Mammary epithelial cell (primary cell): ENCODE measurements at regions of chr11 and their contacts with region 1.

Region 1: DNA sequence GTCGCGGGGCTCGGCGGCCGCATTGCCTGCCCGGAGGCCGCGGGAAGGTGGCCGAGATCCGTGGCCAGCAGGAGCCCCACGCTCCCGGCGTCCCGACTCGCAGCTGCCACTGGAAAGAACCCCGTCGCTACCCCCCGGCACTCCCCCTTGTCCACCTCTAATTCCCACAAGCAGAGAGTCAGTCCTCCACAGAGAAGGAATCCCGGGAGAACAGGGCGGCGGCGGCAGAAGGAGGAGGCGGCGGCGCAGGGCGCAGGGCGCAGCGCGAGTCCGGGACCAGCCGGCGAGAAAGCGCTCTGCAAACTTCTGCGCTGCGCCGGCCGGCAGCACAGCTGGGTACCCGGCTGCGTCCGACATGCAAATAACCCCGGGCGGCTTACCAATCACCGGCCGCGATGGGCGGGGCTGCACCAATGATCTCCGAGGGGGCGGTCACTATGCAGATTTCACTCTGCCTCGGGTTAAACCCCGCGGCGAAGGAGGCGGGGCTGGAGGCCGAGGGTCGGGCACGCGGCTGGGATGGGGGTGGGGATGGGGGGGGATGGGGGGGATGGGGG is at the start of gene ABTB2:
- DNase-seq: peak; percentile 96
- H3K4me3 ChIP-seq: peak within 1 kb of the TSS; percentile 56 to 67 (median 64)
- H3K27ac ChIP-seq: peak within 1 kb of the TSS; percentile 46
- H3K4me1 ChIP-seq: peaks cover 33% of the 10 kb centered on the region
- H3K27me3 ChIP-seq: no peaks in the 10 kb centered on the region
- CTCF ChIP-seq: no peak
- total RNA-seq, gene ABTB2: 5.1 to 8.0 TPM

Region 2: DNA sequence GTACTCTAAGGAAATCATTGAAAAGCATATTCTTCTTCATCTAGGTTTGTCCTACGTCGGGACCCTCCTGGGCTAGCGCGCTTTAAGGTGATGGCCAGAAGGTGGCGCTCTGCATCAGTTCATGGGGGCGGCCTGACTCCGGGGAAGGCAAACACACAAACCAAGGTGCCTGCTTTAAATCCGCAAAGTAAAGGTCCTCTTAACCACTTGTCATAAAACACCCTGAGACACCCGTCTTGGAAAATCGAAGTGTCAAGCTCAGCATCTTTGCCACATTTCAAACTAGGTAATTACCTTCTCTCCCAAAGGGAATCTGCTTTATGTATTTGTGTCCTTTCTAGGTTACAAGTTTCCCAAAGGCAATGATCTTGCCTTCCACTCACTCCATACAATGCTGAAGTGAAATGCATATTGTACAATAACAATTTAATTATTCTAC is 499.8 kb before region 1 on chr11:
- CTCF ChIA-PET with region 1: no interaction called
- dilution Hi-C with region 1: no loop called
- in situ Hi-C with region 1: loop called in 1 of 2 experiments (anchors 25 kb)
- intact Hi-C with region 1: loop called (anchors 1 kb)
- DNase-seq: peak; percentile 35
- H3K4me3 ChIP-seq: no peak overlapping the region
- H3K27ac ChIP-seq: no peak overlapping the region
- H3K4me1 ChIP-seq: no peaks in the 10 kb centered on the region
- H3K27me3 ChIP-seq: no peaks in the 10 kb centered on the region
- CTCF ChIP-seq: peak; percentile 69 to 97

Region 3: DNA sequence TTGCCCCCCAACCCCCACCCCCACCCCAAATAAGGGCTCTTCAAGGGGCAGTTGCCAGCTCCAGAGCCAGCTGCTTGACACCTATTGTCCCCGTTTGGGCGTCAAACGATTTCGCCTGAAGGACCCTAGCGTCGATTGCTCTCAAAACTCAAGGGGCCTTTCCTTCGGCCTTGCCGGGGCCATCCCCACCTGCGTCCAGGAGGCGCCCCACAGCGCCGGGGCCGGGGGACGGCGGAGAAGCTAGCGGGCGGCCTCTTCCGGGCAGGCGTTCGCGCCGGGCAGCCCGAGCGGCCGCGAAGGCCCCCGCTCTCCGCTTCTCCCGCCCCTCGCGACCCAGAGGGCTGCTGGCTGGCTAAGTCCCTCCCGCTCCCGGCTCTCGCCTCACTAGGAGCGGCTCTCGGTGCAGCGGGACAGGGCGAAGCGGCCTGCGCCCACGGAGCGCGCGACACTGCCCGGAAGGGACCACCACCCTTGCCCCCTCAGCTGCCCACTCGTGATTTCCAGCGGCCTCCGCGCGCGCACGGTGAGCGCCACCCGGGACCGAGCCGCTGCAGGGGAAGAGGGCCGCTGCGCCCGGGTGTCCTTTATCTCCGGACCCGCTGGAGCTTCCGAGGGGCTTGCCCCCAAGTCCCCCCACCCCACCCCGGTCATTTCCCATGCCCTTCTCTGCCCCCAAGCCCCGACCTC is 306.3 kb before region 1 on chr11 and contains the start of gene CAPRIN1:
- CTCF ChIA-PET with region 1: no interaction called
- dilution Hi-C with region 1: no loop called
- in situ Hi-C with region 1: no loop called
- intact Hi-C with region 1: loop called (anchors 5 kb)
- DNase-seq: peak; percentile 89
- H3K4me3 ChIP-seq: peak within 1 kb of the TSS; percentile 90 to 100 (median 99)
- H3K27ac ChIP-seq: peak within 1 kb of the TSS; percentile 94
- H3K4me1 ChIP-seq: peaks cover 10% of the 10 kb centered on the region
- H3K27me3 ChIP-seq: no peaks in the 10 kb centered on the region
- CTCF ChIP-seq: no peak
- total RNA-seq, gene CAPRIN1: 194 to 217 TPM

Region 4: DNA sequence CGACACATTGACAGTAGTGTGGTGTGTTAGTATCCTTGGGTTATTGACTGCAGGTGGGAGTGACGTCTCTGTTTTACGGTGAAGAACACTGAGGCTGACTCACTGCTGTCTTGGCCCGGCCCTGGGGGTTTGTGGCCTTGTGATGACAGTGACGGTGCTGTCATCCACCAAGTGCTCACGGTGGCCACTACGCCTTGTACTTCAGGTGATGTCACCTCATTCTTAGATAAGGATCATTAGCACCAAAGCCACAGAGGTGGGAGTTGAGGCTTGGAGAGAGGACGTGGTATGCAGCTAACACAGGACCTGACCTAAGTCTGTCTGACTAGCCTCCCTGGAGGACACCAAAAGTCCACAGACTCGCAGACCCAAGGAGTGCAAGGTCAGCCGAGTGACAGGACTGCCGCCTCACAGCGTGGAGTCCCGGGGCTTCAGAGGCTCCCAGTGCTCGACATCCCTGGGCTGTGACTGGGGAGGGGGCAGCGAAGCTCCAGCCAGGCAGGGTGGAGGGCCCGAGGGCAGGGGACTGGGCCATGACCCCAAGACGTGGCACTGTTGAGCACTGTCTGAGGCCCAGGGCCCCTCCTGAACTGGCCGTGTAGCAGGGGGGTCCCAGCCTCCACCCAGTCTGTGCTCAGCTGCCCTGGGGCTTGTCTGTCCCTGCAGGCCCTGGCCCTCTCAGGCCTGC is 195.8 kb before region 1 on chr11:
- CTCF ChIA-PET with region 1: no interaction called
- dilution Hi-C with region 1: no loop called
- in situ Hi-C with region 1: loop called in 1 of 2 experiments (anchors 5 kb)
- intact Hi-C with region 1: no loop called
- DNase-seq: peak; percentile 47
- H3K4me3 ChIP-seq: no peak overlapping the region
- H3K27ac ChIP-seq: no peak overlapping the region
- H3K4me1 ChIP-seq: peaks cover 5% of the 10 kb centered on the region
- H3K27me3 ChIP-seq: no peaks in the 10 kb centered on the region
- CTCF ChIP-seq: no peak

Region 5: GRCh38 chr11:34192481-34193401 is 165.0 kb before region 1 on chr11:
- CTCF ChIA-PET with region 1: no interaction called
- dilution Hi-C with region 1: no loop called
- in situ Hi-C with region 1: loop called in 1 of 2 experiments (anchors 10 kb)
- intact Hi-C with region 1: loop called (anchors 5 kb)
- DNase-seq: peak; percentile 98
- H3K4me3 ChIP-seq: peak overlapping the region in 2 of 3 experiments; percentile 1 to 13
- H3K27ac ChIP-seq: peak overlapping the region; percentile 45
- H3K4me1 ChIP-seq: peaks cover 18% of the 10 kb centered on the region
- H3K27me3 ChIP-seq: no peaks in the 10 kb centered on the region
- CTCF ChIP-seq: no peak

Region 6: DNA sequence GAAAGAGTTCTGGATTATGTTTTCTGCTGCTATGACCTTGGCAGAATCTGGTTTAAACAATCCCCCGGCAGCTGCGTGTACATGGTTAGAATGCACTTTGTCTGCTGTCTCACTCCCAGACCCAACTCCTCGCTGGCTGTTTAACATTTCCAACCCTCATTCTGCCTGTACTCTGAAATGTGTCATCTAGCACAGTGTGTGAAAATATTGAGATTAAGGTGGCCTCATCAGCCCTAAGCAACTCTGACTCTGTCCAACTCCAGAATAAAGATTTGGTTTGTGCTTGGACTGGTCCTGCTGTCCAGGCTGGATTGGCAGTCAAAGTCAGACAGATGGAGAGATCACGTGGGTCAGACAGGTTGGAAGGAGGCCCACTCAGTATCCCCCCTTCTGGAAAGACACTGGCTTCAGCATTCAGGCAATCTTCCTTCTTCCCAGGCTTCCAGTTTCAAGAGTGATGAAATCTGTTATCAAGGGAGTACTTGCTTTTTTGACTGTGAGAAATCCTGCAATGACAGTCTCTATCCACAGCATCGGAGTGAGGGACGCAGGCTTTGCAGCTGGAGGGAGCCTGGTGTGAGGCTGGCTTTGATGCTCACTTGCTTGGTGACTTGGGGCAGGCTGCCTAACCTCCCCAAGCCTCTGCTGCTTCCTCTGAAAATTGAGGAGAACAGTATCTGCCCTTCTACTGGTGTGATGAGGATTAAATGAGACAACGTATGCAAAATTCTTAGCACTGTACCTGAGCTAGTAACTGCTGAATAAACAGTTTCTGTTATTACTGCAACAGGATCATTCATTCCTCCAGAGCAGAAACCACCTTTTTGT is 29.8 kb before region 1 on chr11:
- CTCF ChIA-PET with region 1: no interaction called
- dilution Hi-C with region 1: no loop called
- in situ Hi-C with region 1: no loop called
- intact Hi-C with region 1: loop called (anchors 1 kb)
- DNase-seq: no peak
- H3K4me3 ChIP-seq: no peak overlapping the region
- H3K27ac ChIP-seq: no peak overlapping the region
- H3K4me1 ChIP-seq: peaks cover 15% of the 10 kb centered on the region
- H3K27me3 ChIP-seq: no peaks in the 10 kb centered on the region
- CTCF ChIP-seq: no peak

Region 7: DNA sequence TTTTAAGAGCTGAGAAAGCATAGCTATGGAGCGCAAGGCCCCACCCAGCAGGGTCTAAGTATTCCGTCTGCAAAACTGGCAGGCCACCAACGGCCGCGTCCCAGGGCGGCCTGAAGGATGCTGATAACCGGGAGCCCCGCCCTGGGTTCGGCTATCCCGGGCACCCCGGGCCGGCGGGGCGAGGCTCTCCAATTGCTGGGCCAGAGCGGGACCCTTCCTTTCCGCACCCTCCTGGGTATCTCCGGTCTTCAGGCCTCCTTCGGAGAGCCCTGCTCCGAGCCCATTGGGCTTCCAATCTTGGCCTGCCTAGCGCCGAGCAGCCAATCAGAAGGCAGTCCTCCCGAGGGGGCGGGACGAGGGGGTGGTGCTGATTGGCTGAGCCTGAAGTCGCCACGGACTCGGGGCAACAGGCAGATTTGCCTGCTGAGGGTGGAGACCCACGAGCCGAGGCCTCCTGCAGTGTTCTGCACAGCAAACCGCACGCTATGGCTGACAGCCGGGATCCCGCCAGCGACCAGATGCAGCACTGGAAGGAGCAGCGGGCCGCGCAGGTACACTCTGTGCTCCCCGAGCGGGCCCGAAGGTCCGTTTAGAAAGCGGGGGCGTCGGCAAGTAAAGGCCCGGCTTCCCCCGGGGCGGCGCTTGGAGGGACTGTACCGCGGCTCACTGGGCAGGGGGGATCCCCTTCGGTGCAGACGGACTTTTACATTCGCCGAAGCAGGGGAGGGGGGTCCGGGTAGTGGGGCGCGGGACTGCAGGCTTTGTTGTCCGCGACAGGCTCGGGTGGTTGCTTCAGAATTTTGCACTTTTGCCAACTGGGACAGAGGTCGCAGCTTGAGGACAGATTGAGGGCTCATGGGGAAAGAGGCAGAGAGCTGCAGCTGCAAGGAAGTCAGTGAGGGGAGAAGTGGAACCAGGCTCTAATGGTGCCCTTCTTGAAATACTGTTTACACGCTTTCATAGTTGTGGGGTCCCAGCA is 81.0 kb after region 1 on chr11 and contains the start of gene CAT:
- CTCF ChIA-PET with region 1: no interaction called
- dilution Hi-C with region 1: no loop called
- in situ Hi-C with region 1: no loop called
- intact Hi-C with region 1: no loop called
- DNase-seq: peak; percentile 97
- H3K4me3 ChIP-seq: peak within 1 kb of the TSS; percentile 84 to 90 (median 88)
- H3K27ac ChIP-seq: peak within 1 kb of the TSS; percentile 60
- H3K4me1 ChIP-seq: peaks cover 9% of the 10 kb centered on the region
- H3K27me3 ChIP-seq: no peaks in the 10 kb centered on the region
- CTCF ChIP-seq: no peak
- total RNA-seq, gene CAT: 30.6 to 147 TPM